RWPE1 (cell line): ENCODE measurements at regions of chr19 and their contacts with region 1.

Region 1: DNA sequence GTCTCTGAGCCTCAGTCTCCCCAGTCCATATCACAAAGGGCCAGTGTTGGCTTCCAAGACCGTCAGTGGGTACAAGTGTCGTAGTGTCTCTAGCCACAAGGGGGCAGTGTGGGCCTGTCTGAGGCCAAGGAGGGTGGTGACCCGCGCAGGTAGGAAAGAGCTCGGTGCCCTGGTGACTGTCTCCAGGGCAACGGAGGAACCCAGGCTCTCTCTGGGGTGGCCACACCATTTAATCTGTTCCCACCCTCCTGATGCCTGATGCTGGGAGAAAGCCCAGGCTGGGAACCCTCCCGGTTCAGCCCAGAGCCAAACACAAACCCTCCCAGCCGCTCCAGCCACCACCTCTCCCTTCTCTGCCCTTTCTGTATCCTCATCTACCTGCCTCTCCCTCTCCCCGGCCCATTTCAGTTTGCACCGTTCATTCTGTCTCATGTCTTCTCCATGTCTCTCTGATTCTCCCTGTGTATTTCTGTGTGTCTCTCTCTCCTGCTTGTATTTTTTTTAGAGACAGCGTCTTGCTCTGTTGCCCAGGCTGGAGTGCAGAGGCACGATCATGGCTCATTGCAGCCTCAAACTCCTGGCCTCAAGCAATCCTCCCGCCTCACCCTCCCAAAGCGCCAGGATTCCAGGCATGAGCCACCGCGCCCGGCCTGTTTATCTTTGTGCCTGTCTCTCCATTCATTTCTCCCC is 17.5 kb upstream of the MEIS3 start:
- DNase-seq: peak; percentile 68
- H3K27ac ChIP-seq: no peak overlapping the region
- CTCF ChIP-seq: peak; percentile 87

Region 2: GRCh38 chr19:47363758-47364531 is 72.9 kb before region 1 on chr19:
- CTCF ChIA-PET with region 1: no interaction called
- POLR2A ChIA-PET with region 1: no interaction called
- DNase-seq: no peak
- H3K27ac ChIP-seq: no peak overlapping the region
- CTCF ChIP-seq: no peak

Region 3: GRCh38 chr19:47447470-47448359 is 10.9 kb after region 1 on chr19:
- CTCF ChIA-PET with region 1: interaction called, 21 read pairs
- POLR2A ChIA-PET with region 1: interaction called, 3 read pairs
- DNase-seq: peak; percentile 88
- H3K27ac ChIP-seq: peak overlapping the region; percentile 63
- CTCF ChIP-seq: no peak

Region 4: DNA sequence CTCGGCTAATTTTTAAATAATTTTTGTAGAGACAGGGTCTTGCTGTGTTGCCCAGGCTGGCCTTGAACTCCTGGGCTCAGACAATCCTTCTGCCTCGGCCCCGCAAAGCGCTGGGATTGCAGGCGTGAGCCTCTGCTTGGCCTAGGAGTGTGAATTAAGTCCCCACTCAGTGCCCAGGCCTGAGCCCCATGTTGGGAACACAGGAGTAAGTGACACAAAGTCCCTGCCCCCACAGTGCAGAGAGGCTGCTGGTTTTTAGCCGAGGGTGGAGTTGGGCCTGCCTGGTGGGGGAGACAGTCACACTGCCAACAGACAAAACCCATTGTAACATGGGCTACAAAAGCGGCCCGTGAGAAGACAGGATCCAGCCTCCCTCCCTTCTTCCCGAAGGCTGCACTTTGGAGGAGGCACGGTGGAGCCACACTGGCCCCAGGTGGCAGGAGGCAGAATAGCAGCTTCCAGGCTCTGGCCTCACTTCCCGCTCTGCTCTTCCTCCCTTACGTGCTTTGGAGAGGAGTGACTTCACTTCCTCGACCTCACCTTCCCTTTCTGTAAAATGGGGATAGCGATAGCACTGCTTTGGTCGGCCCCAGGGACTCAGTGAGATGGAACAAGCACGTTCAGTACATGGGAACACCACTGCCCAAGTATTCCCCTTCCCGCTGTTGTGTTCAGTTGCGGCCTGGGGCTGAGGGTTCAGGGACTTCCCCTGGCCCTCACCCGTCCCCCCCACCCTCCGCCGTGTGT is 261.2 kb after region 1 on chr19:
- CTCF ChIA-PET with region 1: interaction called, 13 read pairs
- POLR2A ChIA-PET with region 1: no interaction called
- DNase-seq: peak; percentile 76
- H3K27ac ChIP-seq: peak overlapping the region; percentile 64
- CTCF ChIP-seq: peak; percentile 96

Region 5: GRCh38 chr19:47707135-47707925 is 270.5 kb after region 1 on chr19:
- CTCF ChIA-PET with region 1: interaction called, 43 read pairs
- POLR2A ChIA-PET with region 1: no interaction called
- DNase-seq: peak; percentile 60
- H3K27ac ChIP-seq: no peak overlapping the region
- CTCF ChIP-seq: peak; percentile 82